ENCODE measurements at regions of chr14 and their contacts with region 1.

Region 1: DNA sequence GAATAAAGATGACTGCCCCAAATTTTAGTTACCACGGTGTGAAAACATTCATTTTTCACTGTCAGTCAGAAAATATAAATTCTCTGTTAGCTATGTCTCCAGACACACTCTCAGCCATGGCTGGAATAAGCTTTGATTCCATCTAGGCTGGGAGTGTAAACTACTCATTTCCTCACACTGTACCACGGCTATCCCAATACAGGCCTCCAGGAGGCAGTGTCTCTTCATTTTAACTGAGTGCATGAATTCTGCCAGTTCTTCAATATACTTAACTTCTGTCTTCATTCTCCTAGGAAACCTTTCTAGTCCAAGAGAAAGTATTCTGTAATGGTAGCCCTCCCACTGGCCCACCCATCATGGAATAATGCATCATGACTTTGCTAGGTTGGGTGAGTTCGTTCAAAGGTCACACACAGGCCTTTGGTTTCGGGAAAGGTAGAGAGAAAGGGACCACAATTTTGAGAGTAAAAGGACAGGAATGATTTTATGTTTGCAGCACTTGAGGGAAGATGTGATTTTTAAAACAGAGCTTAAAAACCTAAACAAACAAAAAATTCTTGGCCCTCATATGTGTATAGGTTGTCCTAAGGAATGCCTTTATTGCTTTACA is 381.1 kb downstream of the SEC23A start:
- DNase-seq: peak in 8 of 10 donors; percentile 37 to 83 (median 53)
- H3K4me3 ChIP-seq: no peak overlapping the region
- H3K27ac ChIP-seq: peak overlapping the region in 3 of 59 donors; percentile 1 to 21 (median 16)
- H3K27me3 ChIP-seq: no peaks in the 10 kb centered on the region
- CTCF ChIP-seq: peak; percentile 64 to 96 (median 87)

Region 2: DNA sequence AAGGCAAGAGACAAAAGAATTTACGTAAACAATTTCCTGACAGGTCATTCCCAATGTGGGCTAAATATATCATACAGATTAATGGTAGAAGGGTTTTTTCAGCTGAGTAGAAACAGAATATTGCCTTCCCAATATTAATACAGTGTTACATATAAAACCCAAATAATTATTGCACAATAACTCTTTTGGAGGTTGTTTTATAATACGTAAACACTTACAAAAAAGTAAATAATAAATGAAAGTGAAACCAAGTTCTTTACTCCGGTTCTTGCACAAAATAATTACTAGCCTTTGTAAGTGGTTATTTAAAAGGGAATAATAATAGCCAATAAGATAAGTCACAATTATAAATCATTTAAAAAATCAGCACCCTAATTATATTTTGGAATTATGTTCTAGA is 632.8 kb before region 1 on chr14:
- intact Hi-C with region 1: no loop called
- DNase-seq: no peak
- H3K4me3 ChIP-seq: peak overlapping the region in 10 of 59 donors; percentile 3 to 32 (median 16)
- H3K27ac ChIP-seq: no peak overlapping the region
- H3K27me3 ChIP-seq: no peaks in the 10 kb centered on the region
- CTCF ChIP-seq: no peak

Region 3: DNA sequence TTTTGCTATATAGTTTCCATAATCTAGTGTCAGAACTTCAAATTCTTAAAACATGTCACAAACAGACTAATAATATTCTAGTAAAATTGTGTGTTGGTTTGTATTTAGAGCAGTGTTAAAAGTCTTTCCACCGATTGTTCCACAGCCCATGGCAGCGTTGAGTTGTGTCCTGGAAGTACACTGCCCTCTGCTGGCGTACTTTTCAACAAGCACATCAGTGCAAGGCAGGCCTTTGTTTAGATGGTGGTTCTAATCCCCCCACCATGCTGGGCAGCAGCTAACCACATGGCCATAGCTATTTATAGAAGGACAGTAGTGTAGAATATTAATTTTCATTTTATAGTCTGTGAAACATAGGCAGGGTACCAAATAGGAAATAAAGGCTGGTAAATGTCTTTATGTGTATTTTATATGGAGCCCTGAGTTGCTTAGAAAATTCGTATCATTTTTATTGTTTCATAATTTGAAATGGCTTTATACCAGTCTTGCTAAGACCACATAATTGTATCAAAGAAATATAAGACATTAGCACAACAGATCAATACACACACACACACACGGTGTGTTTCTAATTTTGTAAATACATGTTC is 145.7 kb after region 1 on chr14:
- intact Hi-C with region 1: loop called (anchors 1 to 5 kb)
- DNase-seq: peak; percentile 48 to 94 (median 80)
- H3K4me3 ChIP-seq: peak overlapping the region in 3 of 59 donors; percentile 13 to 45 (median 26)
- H3K27ac ChIP-seq: peak overlapping the region in 42 of 59 donors; percentile 0 to 77 (median 62)
- H3K27me3 ChIP-seq: peaks cover 0 to 4% (median 0%) of the 10 kb centered on the region in 45 donors
- CTCF ChIP-seq: peak; percentile 83 to 98 (median 92)

Region 4: GRCh38 chr14:38948171-38948570 is 226.2 kb after region 1 on chr14:
- intact Hi-C with region 1: loop called in 1 of 2 experiments (anchors 5 kb)
- DNase-seq: no peak
- H3K4me3 ChIP-seq: peak overlapping the region in 55 of 59 donors; percentile 2 to 66 (median 37)
- H3K27ac ChIP-seq: peak overlapping the region; percentile 54 to 97 (median 87)
- H3K27me3 ChIP-seq: no peaks in the 10 kb centered on the region
- CTCF ChIP-seq: peak in 4 of 56 donors; percentile 6 to 33 (median 16)